Mammary epithelial cell (primary cell): ENCODE measurements at regions of chr9 and their contacts with region 1.

Region 1: GRCh38 chr9:131046581-131047202 is 37.7 kb downstream of the LAMC3 start:
- DNase-seq: peak; percentile 39
- H3K4me3 ChIP-seq: no peak overlapping the region
- H3K27ac ChIP-seq: no peak overlapping the region
- H3K4me1 ChIP-seq: no peaks in the 10 kb centered on the region
- H3K27me3 ChIP-seq: peaks cover 2% of the 10 kb centered on the region
- CTCF ChIP-seq: peak; percentile 67 to 96

Region 2: GRCh38 chr9:130461218-130461630 is 585.5 kb before region 1 on chr9:
- CTCF ChIA-PET with region 1: no interaction called
- dilution Hi-C with region 1: no loop called
- in situ Hi-C with region 1: no loop called
- intact Hi-C with region 1: loop called (anchors 10 kb)
- DNase-seq: peak; percentile 16
- H3K4me3 ChIP-seq: no peak overlapping the region
- H3K27ac ChIP-seq: no peak overlapping the region
- H3K4me1 ChIP-seq: no peaks in the 10 kb centered on the region
- H3K27me3 ChIP-seq: no peaks in the 10 kb centered on the region
- CTCF ChIP-seq: peak; percentile 53 to 81

Region 3: GRCh38 chr9:130866474-130866965 is 180.2 kb before region 1 on chr9:
- CTCF ChIA-PET with region 1: interaction called, 7 read pairs
- dilution Hi-C with region 1: no loop called
- in situ Hi-C with region 1: no loop called
- intact Hi-C with region 1: loop called (anchors 1 kb)
- DNase-seq: peak; percentile 87
- H3K4me3 ChIP-seq: peak overlapping the region in 1 of 3 experiments; percentile 43
- H3K27ac ChIP-seq: no peak overlapping the region
- H3K4me1 ChIP-seq: peaks cover 4% of the 10 kb centered on the region
- H3K27me3 ChIP-seq: no peaks in the 10 kb centered on the region
- CTCF ChIP-seq: peak; percentile 96 to 99

Region 4: GRCh38 chr9:130940693-130941576 is 105.8 kb before region 1 on chr9:
- CTCF ChIA-PET with region 1: no interaction called
- dilution Hi-C with region 1: no loop called
- in situ Hi-C with region 1: no loop called
- intact Hi-C with region 1: loop called (anchors 2 kb)
- DNase-seq: peak; percentile 91
- H3K4me3 ChIP-seq: no peak overlapping the region
- H3K27ac ChIP-seq: no peak overlapping the region
- H3K4me1 ChIP-seq: peaks cover 12% of the 10 kb centered on the region
- H3K27me3 ChIP-seq: no peaks in the 10 kb centered on the region
- CTCF ChIP-seq: peak; percentile 73 to 95

Region 5: GRCh38 chr9:131008909-131009618 is 37.6 kb before region 1 on chr9 and contains the start of gene LAMC3:
- CTCF ChIA-PET with region 1: no interaction called
- dilution Hi-C with region 1: no loop called
- in situ Hi-C with region 1: no loop called
- intact Hi-C with region 1: loop called (anchors 1 kb)
- DNase-seq: no peak
- H3K4me3 ChIP-seq: peak within 1 kb of the TSS in 2 of 3 experiments; percentile 21 to 27
- H3K27ac ChIP-seq: no peak within 1 kb of the TSS
- H3K4me1 ChIP-seq: no peaks in the 10 kb centered on the region
- H3K27me3 ChIP-seq: peaks cover 6% of the 10 kb centered on the region
- CTCF ChIP-seq: peak in 1 of 2 donors; percentile 32
- total RNA-seq, gene LAMC3: not detected

Region 6: DNA sequence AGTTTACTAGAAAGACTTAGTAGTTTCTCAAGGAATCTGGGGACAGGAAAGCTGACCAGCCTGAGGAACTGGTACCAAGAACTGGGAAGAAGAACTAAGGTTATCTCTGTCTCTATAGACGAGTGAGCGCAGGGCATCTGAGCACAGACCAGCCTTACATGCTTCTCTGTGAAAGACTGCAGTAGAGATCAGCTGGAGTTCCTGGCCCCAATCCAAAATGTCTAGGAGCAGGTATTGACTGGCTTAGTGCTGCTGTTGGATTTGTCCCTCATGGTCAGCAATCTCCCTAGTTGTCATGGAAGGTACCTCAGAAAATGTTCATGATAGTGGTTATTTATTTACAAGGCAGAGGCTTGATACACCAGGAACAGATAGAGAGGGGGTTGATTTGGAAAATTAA is 92.0 kb after region 1 on chr9:
- CTCF ChIA-PET with region 1: no interaction called
- dilution Hi-C with region 1: loop called (anchors 5 kb)
- in situ Hi-C with region 1: no loop called
- intact Hi-C with region 1: no loop called
- DNase-seq: no peak
- H3K4me3 ChIP-seq: no peak overlapping the region
- H3K27ac ChIP-seq: no peak overlapping the region
- H3K4me1 ChIP-seq: no peaks in the 10 kb centered on the region
- H3K27me3 ChIP-seq: no peaks in the 10 kb centered on the region
- CTCF ChIP-seq: no peak

Region 7: DNA sequence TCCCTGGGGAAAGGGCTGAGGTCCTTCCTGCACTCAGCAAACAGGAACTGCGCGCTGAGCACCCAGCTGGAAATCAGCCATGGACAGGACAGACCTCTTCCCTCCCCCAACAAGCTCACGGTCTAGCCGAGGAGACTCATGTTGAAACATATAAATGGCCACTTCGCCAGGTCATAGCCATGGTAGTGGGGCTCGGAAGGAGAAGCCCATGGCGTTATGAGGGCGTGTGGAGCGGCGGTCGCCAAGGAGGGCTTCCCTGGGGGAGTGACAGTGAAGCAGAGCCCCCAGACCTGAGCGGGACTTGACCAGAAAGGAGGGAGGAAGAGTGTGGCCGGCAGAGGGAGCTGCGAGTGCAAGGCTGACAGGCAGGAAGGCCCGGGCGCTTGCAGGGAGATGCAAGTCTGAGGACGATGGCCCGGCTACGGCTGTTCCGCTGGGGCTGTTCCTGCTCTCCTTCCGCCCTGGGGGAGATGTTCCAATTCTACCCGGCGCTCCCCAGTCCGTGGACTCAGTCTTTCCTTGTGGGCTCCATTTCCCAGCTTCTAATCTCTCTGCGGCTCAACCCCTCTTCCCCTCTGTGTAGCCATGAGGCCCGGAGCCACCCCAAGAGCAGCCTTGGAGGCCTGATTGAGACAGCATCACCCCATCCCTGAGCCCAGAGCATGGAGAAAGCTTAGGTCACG is 303.3 kb after region 1 on chr9:
- CTCF ChIA-PET with region 1: no interaction called
- dilution Hi-C with region 1: no loop called
- in situ Hi-C with region 1: loop called in 1 of 2 experiments (anchors 25 kb)
- intact Hi-C with region 1: no loop called
- DNase-seq: peak; percentile 58
- H3K4me3 ChIP-seq: peak overlapping the region in 2 of 3 experiments; percentile 21 to 41
- H3K27ac ChIP-seq: no peak overlapping the region
- H3K4me1 ChIP-seq: peaks cover 8% of the 10 kb centered on the region
- H3K27me3 ChIP-seq: no peaks in the 10 kb centered on the region
- CTCF ChIP-seq: peak; percentile 75 to 88